ENCODE measurements at regions of chr2 and their contacts with region 1.

Region 1: DNA sequence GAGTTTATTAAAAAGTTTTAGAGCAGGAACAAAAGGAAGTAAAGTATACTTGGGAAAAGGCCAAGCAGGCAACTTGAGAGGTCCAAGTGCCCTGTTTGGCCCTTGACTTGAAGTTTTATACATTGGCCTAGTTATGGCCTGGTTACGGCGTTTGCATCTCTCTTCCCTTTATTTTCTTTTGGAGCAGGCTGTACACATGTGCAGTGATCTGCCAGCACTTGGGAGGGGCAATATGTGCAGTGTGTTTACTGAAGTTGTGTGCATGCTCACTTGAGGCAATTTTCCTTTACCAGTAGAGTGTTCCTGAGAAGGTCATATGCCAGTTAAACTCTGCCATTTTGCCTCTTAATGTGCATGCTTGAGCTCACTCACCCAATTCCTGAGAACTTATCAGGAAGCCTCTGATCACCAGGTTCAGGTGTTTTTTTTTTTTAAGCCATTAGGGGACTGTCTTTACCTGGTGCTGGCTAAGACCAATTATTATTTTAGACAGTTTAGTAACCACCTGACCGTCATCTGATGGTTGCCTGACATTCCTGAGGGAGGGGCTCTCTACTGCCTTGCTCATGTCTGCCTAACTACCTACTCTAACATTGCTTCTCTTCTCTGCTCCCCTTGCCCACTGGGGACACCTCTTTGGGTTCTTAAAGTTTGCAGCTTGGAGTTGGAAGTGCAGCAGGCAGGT is 48.0 kb downstream of the SCN2A start:
- DNase-seq: no peak
- ATAC-seq: no peak
- H3K4me3 ChIP-seq: no peak overlapping the region
- H3K27ac ChIP-seq: no peak overlapping the region
- H3K4me1 ChIP-seq: no peaks in the 10 kb centered on the region
- H3K27me3 ChIP-seq: no peaks in the 10 kb centered on the region
- CTCF ChIP-seq: no peak
- POLR2A ChIP-seq: no peak

Region 2: GRCh38 chr2:164882276-164882675 is 405.0 kb before region 1 on chr2:
- intact Hi-C with region 1: no loop called
- DNase-seq: no peak
- ATAC-seq: peak in 1 of 4 donors; percentile 33
- H3K4me3 ChIP-seq: no peak overlapping the region
- H3K27ac ChIP-seq: no peak overlapping the region
- H3K4me1 ChIP-seq: no peaks in the 10 kb centered on the region
- H3K27me3 ChIP-seq: no peaks in the 10 kb centered on the region
- CTCF ChIP-seq: no peak
- POLR2A ChIP-seq: no peak

Region 3: GRCh38 chr2:165055082-165055851 is 232.0 kb before region 1 on chr2:
- intact Hi-C with region 1: no loop called
- DNase-seq: no peak
- ATAC-seq: peak; percentile 83 to 95 (median 90)
- H3K4me3 ChIP-seq: no peak overlapping the region
- H3K27ac ChIP-seq: peak overlapping the region; percentile 5 to 77 (median 54)
- H3K4me1 ChIP-seq: peaks cover 0 to 19% (median 0%) of the 10 kb centered on the region in 12 donors
- H3K27me3 ChIP-seq: no peaks in the 10 kb centered on the region
- CTCF ChIP-seq: no peak
- POLR2A ChIP-seq: no peak

Region 4: DNA sequence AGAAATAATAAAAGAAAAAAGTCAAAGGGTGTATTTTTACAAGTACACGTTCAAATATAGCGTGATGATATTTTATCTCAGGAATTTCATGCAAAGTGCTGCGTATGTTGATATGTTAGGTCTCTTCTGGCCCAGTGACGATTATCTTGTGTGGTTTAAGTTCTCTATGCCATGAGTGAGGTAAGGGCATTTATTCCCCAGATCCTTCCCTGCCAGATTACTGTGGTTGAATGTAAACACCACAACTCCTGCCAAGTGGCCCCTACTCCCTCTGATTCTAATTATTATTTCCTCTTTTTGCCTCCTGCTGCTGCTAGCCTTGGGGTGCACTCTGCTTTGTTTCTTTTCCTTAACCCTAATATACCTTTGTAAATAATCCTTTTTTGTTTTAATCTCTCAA is 35.9 kb before region 1 on chr2:
- intact Hi-C with region 1: loop called in 1 of 10 experiments (anchors 5 kb)
- DNase-seq: no peak
- ATAC-seq: no peak
- H3K4me3 ChIP-seq: no peak overlapping the region
- H3K27ac ChIP-seq: no peak overlapping the region
- H3K4me1 ChIP-seq: peaks cover 0 to 5% (median 0%) of the 10 kb centered on the region in 12 donors
- H3K27me3 ChIP-seq: no peaks in the 10 kb centered on the region
- CTCF ChIP-seq: no peak
- POLR2A ChIP-seq: no peak

Measured in heart left ventricle (tissue), 16 donors.